Endothelial cell of umbilical vein (primary cell): ENCODE measurements at regions of chr21 and their contacts with region 1.

Region 1: DNA sequence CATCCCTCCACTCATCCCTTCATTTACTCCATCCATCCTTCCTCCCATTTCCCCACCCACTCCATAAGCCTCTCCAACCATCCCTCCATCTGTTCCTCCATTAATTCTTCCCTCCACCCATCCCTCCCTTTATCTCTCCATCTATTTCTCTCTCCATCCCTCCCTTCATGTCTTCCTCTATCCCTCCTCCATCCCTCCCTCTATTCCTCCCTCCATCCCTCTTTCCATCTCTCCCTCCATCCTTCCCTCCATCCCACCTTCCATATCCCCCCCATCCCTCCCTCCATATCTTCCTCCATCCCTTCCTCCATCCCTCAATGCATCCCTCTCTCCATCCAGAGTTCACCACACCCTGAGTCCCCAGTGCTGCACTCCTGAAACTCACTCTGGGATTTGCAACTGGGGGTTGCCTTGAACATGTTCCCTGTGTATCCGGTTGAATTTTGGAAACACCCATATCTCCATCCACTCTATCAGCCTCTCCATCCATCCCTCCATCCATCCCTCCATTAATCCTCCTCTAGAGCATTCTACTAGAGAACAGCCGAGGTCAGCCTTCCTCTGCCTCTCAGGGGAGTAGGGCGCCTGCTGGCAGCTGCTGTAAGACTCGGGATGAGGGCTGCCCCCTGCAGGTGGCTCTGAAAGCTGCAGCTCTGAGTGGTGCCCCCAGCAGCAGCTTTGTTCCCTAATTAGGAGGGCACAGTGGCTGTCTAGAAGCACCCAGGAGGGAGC is 39.4 kb downstream of the ABCG1 start:
- DNase-seq: peak; percentile 49
- H3K4me3 ChIP-seq: no peak overlapping the region
- H3K27ac ChIP-seq: no peak overlapping the region
- H3K4me1 ChIP-seq: peaks cover 13% of the 10 kb centered on the region
- H3K27me3 ChIP-seq: no peaks in the 10 kb centered on the region
- CTCF ChIP-seq: peak; percentile 94 to 96
- POLR2A ChIP-seq: no peak

Region 2: DNA sequence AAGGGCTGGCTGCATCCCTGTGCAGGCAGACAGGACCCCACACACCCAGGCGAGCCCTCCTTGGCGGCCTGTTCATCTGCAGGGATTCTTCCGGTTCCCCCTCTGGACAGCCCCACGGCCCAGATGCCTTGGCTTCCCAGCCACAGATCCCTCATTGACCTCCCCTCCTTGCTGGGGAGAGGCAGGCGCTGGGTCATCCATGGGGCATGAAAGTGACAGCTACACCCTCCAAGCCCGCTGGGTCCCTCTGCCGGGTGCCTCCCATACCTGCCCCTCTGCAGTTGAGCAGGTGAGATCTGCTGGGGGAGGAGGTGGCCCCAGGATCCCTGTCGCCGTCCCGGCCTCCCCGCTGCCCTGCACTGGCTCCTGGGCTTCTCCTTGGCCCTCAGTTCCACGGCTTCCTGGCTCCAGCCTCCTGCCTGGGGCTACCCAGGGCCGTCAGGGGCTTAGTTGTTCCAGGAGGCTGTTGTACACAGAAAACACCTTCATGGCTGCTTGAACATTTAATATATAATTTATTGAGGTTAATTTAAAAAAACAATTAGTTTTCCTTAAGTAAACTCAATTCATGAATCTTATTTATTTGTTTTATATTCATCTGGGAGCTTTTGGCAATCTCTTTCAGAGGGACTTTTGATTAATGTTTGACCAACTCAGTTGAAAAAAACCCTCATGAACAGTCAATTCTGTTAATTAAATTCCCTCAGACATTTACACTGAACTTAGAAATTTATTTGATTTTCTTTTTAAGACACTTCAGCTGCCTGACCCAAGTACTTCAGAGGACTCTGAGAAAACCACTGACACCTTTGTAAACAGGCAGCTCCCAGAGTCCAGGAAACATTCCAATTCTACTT is 107.0 kb before region 1 on chr21:
- CTCF ChIA-PET with region 1: interaction called, 131 read pairs
- POLR2A ChIA-PET with region 1: no interaction called
- dilution Hi-C with region 1: no loop called
- intact Hi-C with region 1: no loop called
- DNase-seq: no peak
- H3K4me3 ChIP-seq: no peak overlapping the region
- H3K27ac ChIP-seq: no peak overlapping the region
- H3K4me1 ChIP-seq: no peaks in the 10 kb centered on the region
- H3K27me3 ChIP-seq: peaks cover 4% of the 10 kb centered on the region in 2 experiments
- CTCF ChIP-seq: no peak
- POLR2A ChIP-seq: no peak

Region 3: DNA sequence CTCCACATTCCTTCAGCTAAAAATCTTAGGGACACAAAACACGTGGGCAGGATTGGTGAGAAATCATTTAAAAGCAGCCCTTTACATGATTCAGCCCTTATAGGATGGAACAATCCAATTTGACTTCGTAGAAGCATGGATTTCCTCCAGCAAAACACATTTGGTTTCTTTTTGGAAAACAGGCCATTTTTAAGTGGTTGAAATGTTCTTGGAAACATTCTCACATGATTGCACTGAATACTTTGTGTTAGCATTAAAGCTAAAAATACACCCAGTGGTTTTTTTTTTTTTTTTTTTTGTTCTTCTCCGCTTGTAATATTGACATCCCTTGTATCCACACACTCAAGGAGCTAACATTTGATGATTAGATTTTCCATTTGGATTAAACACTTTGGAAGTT is 81.5 kb before region 1 on chr21:
- CTCF ChIA-PET with region 1: interaction called, 12 read pairs
- POLR2A ChIA-PET with region 1: no interaction called
- dilution Hi-C with region 1: no loop called
- intact Hi-C with region 1: no loop called
- DNase-seq: no peak
- H3K4me3 ChIP-seq: no peak overlapping the region
- H3K27ac ChIP-seq: no peak overlapping the region
- H3K4me1 ChIP-seq: no peaks in the 10 kb centered on the region
- H3K27me3 ChIP-seq: peaks cover 4 to 12% of the 10 kb centered on the region in 2 experiments
- CTCF ChIP-seq: no peak
- POLR2A ChIP-seq: no peak

Region 4: GRCh38 chr21:42238185-42238934 is 20.0 kb before region 1 on chr21:
- CTCF ChIA-PET with region 1: interaction called, 37 read pairs
- POLR2A ChIA-PET with region 1: interaction called, 3 read pairs
- dilution Hi-C with region 1: no loop called
- intact Hi-C with region 1: loop called (anchors 1 kb)
- DNase-seq: no peak
- H3K4me3 ChIP-seq: no peak overlapping the region
- H3K27ac ChIP-seq: no peak overlapping the region
- H3K4me1 ChIP-seq: peaks cover 19% of the 10 kb centered on the region
- H3K27me3 ChIP-seq: peaks cover 0 to 5% of the 10 kb centered on the region in 2 experiments
- CTCF ChIP-seq: no peak
- POLR2A ChIP-seq: no peak

Region 5: GRCh38 chr21:42309753-42310221 is 51.5 kb after region 1 on chr21:
- CTCF ChIA-PET with region 1: interaction called, 33 read pairs
- POLR2A ChIA-PET with region 1: no interaction called
- dilution Hi-C with region 1: no loop called
- intact Hi-C with region 1: loop called (anchors 2 kb)
- DNase-seq: peak; percentile 30
- H3K4me3 ChIP-seq: no peak overlapping the region
- H3K27ac ChIP-seq: no peak overlapping the region
- H3K4me1 ChIP-seq: no peaks in the 10 kb centered on the region
- H3K27me3 ChIP-seq: peaks cover 2 to 6% of the 10 kb centered on the region in 2 experiments
- CTCF ChIP-seq: peak; percentile 71 to 88
- POLR2A ChIP-seq: no peak

Region 6: DNA sequence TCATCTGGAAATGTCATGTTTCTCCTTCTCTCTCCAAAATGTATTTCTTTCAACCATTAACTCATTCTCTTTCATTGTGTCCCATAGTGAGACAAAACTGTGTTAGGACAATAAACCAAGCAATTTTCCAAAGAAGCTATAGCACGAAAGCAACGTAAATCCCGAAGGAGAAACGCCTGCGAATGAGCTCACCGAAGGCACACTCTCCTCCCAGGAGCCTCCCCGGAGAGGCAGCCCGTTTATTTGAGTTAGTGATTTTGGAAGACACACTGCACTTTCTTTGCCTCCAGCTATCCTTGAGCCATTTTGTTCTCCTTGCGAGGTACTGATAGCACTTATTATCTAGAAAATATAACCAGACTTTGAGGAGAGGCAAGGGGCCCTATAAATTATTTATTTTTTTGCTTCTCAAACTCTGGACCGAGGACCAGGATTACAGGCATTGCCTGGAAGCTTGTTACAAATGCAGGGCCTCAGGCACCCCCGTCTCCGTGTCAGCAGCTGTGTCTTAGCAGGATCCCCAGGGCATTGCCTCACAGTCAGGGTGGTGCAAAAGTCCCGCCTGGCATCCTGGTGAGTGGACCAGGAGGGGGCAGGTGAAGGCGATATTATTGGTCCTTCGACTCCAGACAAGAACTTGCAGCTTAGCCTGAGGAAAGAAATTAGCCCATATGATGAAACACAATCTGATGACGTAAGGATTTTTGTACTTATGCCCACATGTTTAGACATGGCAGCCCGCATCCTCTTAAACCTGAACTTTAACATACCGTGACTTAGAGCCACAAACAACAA is 196.7 kb after region 1 on chr21:
- CTCF ChIA-PET with region 1: interaction called, 4 read pairs
- POLR2A ChIA-PET with region 1: no interaction called
- dilution Hi-C with region 1: no loop called
- intact Hi-C with region 1: loop called (anchors 1 kb)
- DNase-seq: no peak
- H3K4me3 ChIP-seq: no peak overlapping the region
- H3K27ac ChIP-seq: no peak overlapping the region
- H3K4me1 ChIP-seq: no peaks in the 10 kb centered on the region
- H3K27me3 ChIP-seq: peaks cover 2 to 5% of the 10 kb centered on the region in 2 experiments
- CTCF ChIP-seq: no peak
- POLR2A ChIP-seq: no peak